ENCODE measurements at regions of chr5 and their contacts with region 1.

Region 1: GRCh38 chr5:10528056-10528816 is 35.6 kb upstream of the ANKRD33B start:
- DNase-seq: no peak
- H3K4me3 ChIP-seq: no peak overlapping the region
- H3K27ac ChIP-seq: no peak overlapping the region
- H3K4me1 ChIP-seq: peaks cover 0 to 5% (median 3%) of the 10 kb centered on the region in 4 experiments; a peak in 4 of 7 replicates
- H3K27me3 ChIP-seq: no peaks in the 10 kb centered on the region; a peak in 1 of 7 replicates
- CTCF ChIP-seq: peak; percentile 8 to 26 (median 19); a peak in 3 of 4 replicates
- EP300 ChIP-seq: no peak
- POLR2A ChIP-seq: no peak
- RAD21 ChIP-seq: peak in 1 of 2 experiments; percentile 39; a peak in 3 of 4 replicates

Region 2: GRCh38 chr5:10307206-10308148 is 220.8 kb before region 1 on chr5 and contains the start of gene CMBL:
- CTCF ChIA-PET with region 1: no interaction called
- POLR2A ChIA-PET with region 1: no interaction called
- DNase-seq: peak in 1 of 2 experiments; percentile 74
- H3K4me3 ChIP-seq: peak within 1 kb of the TSS; percentile 80 to 97 (median 88)
- H3K27ac ChIP-seq: no peak within 1 kb of the TSS
- H3K4me1 ChIP-seq: peaks cover 0 to 6% (median 4%) of the 10 kb centered on the region in 4 experiments; a peak in 5 of 7 replicates
- H3K27me3 ChIP-seq: peaks cover 0 to 2% (median 0%) of the 10 kb centered on the region in 4 experiments; a peak in 1 of 7 replicates
- CTCF ChIP-seq: no peak
- EP300 ChIP-seq: no peak
- POLR2A ChIP-seq: no peak
- RAD21 ChIP-seq: no peak
- total RNA-seq, gene CMBL: 27.9 and 30.9 TPM in 2 replicates

Region 3: GRCh38 chr5:10513501-10514442 is 14.5 kb before region 1 on chr5:
- CTCF ChIA-PET with region 1: interaction called, 12 read pairs
- POLR2A ChIA-PET with region 1: no interaction called
- DNase-seq: peak; percentile 23 to 79
- H3K4me3 ChIP-seq: no peak overlapping the region
- H3K27ac ChIP-seq: no peak overlapping the region
- H3K4me1 ChIP-seq: peaks cover 0 to 8% (median 6%) of the 10 kb centered on the region in 4 experiments; a peak in 5 of 7 replicates
- H3K27me3 ChIP-seq: no peaks in the 10 kb centered on the region
- CTCF ChIP-seq: no peak
- EP300 ChIP-seq: peak in 1 of 2 experiments; percentile 41; a peak in 1 of 3 replicates
- POLR2A ChIP-seq: no peak
- RAD21 ChIP-seq: 0 out of 4 replicates have a peak, but pooled peaks of 1 of the 2 experiments have one; percentile 2